Activated CD4-positive, alpha-beta memory T cell treated with anti-CD3 and anti-CD28 coated beads, Interleukin-2, amount 10 ng/mL, durations not matched to agents 7 days and 5 days (primary cell): ENCODE measurements at regions of chr4 and their contacts with region 1.

Region 1: GRCh38 chr4:114076899-114077570 is 97.6 kb upstream of the ARSJ start:
- DNase-seq: no peak
- H3K4me3 Mint-ChIP-seq: no peak overlapping the region
- H3K27ac Mint-ChIP-seq: no peak overlapping the region
- H3K4me1 Mint-ChIP-seq: no peaks in the 10 kb centered on the region
- H3K27me3 Mint-ChIP-seq: peaks cover 13% of the 10 kb centered on the region

Region 2: DNA sequence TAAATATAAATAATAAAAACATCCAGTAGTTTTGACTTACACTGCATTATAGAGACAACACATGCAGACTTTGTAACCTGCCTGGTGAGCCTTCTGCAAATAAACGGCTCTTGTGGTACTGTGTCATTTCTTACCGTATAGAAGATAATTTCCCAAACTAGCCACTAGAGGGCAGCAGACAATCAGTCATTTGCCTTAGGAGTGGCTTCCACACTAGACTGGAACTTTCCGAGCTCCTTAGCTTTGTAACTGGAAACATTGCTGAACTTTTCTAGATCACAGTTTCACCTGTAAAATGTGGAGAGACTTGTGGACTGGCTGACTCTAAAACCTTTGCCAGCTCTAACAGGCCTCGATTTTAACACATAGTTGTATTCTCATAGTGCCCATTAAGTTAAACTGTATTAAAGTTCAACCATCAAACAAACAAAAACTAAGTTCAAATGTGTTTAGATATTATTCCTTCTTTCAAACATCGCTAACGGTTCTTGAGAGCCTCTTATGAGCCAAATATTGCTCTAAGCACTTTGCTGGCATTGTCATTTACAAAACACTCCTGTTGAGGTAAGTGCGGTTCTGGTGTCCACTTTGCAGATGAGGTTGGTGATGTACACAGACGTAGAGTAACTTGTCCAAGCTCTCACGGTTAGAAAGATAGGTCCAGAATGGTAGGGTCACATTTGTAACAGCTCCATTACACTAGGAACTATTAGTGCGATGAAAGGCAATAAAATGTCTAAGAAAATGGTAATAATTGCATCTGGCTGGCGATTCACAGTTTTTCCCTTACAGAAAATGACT is 682.1 kb before region 1 on chr4:
- CTCF ChIA-PET with region 1: interaction called, 21 read pairs
- POLR2A ChIA-PET with region 1: no interaction called
- DNase-seq: peak; percentile 49
- H3K4me3 Mint-ChIP-seq: no peak overlapping the region
- H3K27ac Mint-ChIP-seq: no peak overlapping the region
- H3K4me1 Mint-ChIP-seq: peaks cover 2% of the 10 kb centered on the region
- H3K27me3 Mint-ChIP-seq: peaks cover 4% of the 10 kb centered on the region

Region 3: DNA sequence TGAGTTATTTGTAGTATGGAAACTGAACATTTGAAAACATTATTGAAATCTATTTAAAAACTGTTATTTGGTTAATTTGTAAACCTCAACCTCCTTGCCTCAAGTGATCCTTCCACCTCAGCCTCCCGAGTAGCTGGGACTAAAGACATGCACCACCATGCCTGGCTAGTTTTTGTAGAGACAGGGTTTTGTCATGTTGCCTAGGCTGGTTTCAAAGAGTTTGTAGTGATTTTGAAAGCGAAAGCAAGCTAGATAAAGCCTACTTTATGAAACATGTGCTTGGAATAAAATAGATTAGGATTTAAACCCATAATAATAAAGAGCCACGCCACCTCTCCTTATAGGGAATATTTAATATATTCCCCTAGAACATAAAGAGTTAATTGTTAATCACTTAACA is 121.1 kb before region 1 on chr4:
- CTCF ChIA-PET with region 1: interaction called, 10 read pairs
- POLR2A ChIA-PET with region 1: no interaction called
- DNase-seq: no peak
- H3K4me3 Mint-ChIP-seq: no peak overlapping the region
- H3K27ac Mint-ChIP-seq: no peak overlapping the region
- H3K4me1 Mint-ChIP-seq: no peaks in the 10 kb centered on the region
- H3K27me3 Mint-ChIP-seq: peaks cover 7% of the 10 kb centered on the region